Heart right ventricle (tissue), 16 donors: ENCODE measurements at regions of chr13 and their contacts with region 1.

Region 1: GRCh38 chr13:99501184-99501847 is at the start of gene TM9SF2:
- DNase-seq: peak; percentile 98 to 99
- ATAC-seq: peak; percentile 87 to 92 (median 90)
- H3K4me3 ChIP-seq: peak within 1 kb of the TSS; percentile 57 to 96 (median 88)
- H3K27ac ChIP-seq: peak within 1 kb of the TSS; percentile 59 to 95 (median 88)
- H3K4me1 ChIP-seq: peaks cover 3 to 86% (median 64%) of the 10 kb centered on the region in 9 donors
- H3K27me3 ChIP-seq: no peaks in the 10 kb centered on the region
- CTCF ChIP-seq: no peak
- total RNA-seq, gene TM9SF2: 51.7 to 78.8 (median 62.8) TPM

Region 2: DNA sequence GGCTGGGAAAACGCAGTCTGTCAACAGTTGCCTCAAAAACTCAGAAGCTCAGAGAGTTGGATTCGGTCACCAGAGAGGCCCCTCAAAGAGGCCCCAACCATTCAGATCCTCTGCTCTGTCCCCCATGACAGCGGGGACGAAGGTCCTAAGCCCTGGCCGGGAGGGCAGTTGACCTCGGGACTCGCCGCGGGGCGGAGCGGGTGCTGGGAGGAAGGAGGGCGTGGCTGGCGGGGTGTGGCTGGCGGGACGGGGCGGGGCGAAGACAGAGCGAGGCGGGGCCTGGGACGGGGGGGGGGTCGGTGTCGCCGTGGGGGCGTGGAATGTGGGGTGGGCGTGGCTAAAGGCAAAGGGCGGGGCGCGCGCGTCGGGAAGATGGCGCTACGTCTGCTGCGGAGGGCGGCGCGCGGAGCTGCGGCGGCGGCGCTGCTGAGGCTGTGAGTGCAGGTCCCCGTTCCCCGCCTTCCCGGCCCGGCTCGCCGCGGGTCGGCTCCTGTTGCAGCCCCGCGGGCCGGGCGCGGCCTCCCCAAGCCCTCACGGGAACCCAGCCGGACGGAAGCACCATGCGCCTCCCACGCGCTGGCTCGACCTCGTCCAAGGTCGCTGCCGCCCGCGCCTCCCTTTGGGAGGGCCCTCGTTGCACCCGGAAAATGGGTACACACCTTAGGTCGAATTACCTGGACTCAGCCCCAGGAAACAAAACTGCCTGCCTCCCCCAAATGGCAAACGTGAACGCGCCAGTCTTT is 105.2 kb after region 1 on chr13:
- intact Hi-C with region 1: loop called in 1 of 10 experiments (anchors 5 kb)
- DNase-seq: peak; percentile 94
- ATAC-seq: peak; percentile 97 to 99 (median 98)
- H3K4me3 ChIP-seq: peak within 1 kb of the TSS; percentile 56 to 91 (median 71)
- H3K27ac ChIP-seq: peak within 1 kb of the TSS; percentile 49 to 91 (median 84)
- H3K4me1 ChIP-seq: peaks cover 0 to 23% (median 8%) of the 10 kb centered on the region in 9 donors
- H3K27me3 ChIP-seq: no peaks in the 10 kb centered on the region
- CTCF ChIP-seq: peak in 3 of 9 donors; percentile 26 to 31 (median 30)

Region 3: GRCh38 chr13:99758460-99759162 is 257.3 kb after region 1 on chr13:
- intact Hi-C with region 1: no loop called
- DNase-seq: no peak
- ATAC-seq: no peak
- H3K4me3 ChIP-seq: no peak overlapping the region
- H3K27ac ChIP-seq: no peak overlapping the region
- H3K4me1 ChIP-seq: no peaks in the 10 kb centered on the region
- H3K27me3 ChIP-seq: no peaks in the 10 kb centered on the region
- CTCF ChIP-seq: no peak